Activated CD8-positive, alpha-beta T cell treated with anti-CD3 and anti-CD28 coated beads for 36 hours (primary cell): ENCODE measurements at regions of chr1 and their contacts with region 1.

Region 1: GRCh38 chr1:224065455-224065854 is 48.5 kb upstream of the FBXO28 start:
- DNase-seq: no peak
- ATAC-seq: no peak
- H3K4me3 Mint-ChIP-seq: no peak overlapping the region
- H3K27ac Mint-ChIP-seq: no peak overlapping the region
- H3K4me1 Mint-ChIP-seq: peaks cover 2% of the 10 kb centered on the region
- H3K27me3 Mint-ChIP-seq: peaks cover 10% of the 10 kb centered on the region
- CTCF ChIP-seq: no peak

Region 2: GRCh38 chr1:224051086-224051406 is 14.4 kb before region 1 on chr1:
- CTCF ChIA-PET with region 1: interaction called, 13 read pairs
- POLR2A ChIA-PET with region 1: no interaction called
- intact Hi-C with region 1: no loop called
- DNase-seq: no peak
- ATAC-seq: no peak
- H3K4me3 Mint-ChIP-seq: no peak overlapping the region
- H3K27ac Mint-ChIP-seq: no peak overlapping the region
- H3K4me1 Mint-ChIP-seq: no peaks in the 10 kb centered on the region
- H3K27me3 Mint-ChIP-seq: peaks cover 3% of the 10 kb centered on the region
- CTCF ChIP-seq: no peak